ENCODE measurements at regions of chr3 and their contacts with region 1.

Region 1: GRCh38 chr3:187139126-187139894 is at the start of gene RPL39L:
- DNase-seq: peak; percentile 85 to 96 (median 90)
- ATAC-seq: peak; percentile 96 to 99 (median 97)
- H3K4me3 ChIP-seq: peak within 1 kb of the TSS; percentile 54 to 65
- H3K4me3 Mint-ChIP-seq: peak within 1 kb of the TSS; percentile 85 to 88 (median 85)
- H3K27ac ChIP-seq: peak within 1 kb of the TSS; percentile 84
- H3K27ac Mint-ChIP-seq: peak within 1 kb of the TSS; percentile 87 to 92
- H3K4me1 ChIP-seq: peaks cover 0 to 16% of the 10 kb centered on the region in 2 experiments
- H3K4me1 Mint-ChIP-seq: peaks cover 18 to 21% (median 20%) of the 10 kb centered on the region in 3 donors
- H3K27me3 ChIP-seq: no peaks in the 10 kb centered on the region
- H3K27me3 Mint-ChIP-seq: no peaks in the 10 kb centered on the region
- total RNA-seq, gene RPL39L: 0.85 to 3.8 (median 2.1) TPM

Region 2: GRCh38 chr3:187101184-187102072 is 37.9 kb before region 1 on chr3:
- CTCF ChIA-PET with region 1: interaction called, 4 to 11 read pairs
- POLR2A ChIA-PET with region 1: interaction called, 3 read pairs
- DNase-seq: peak in 34 of 35 experiments; percentile 1 to 68 (median 42)
- ATAC-seq: peak; percentile 68 to 86 (median 80)
- H3K4me3 ChIP-seq: peak overlapping the region; percentile 19 to 42
- H3K4me3 Mint-ChIP-seq: peak overlapping the region; percentile 53 to 65 (median 64)
- H3K27ac ChIP-seq: peak overlapping the region; percentile 54
- H3K27ac Mint-ChIP-seq: peak overlapping the region; percentile 71 to 88
- H3K4me1 ChIP-seq: peaks cover 9 to 14% of the 10 kb centered on the region in 2 experiments
- H3K4me1 Mint-ChIP-seq: peaks cover 18 to 50% (median 30%) of the 10 kb centered on the region in 3 donors
- H3K27me3 ChIP-seq: no peaks in the 10 kb centered on the region
- H3K27me3 Mint-ChIP-seq: no peaks in the 10 kb centered on the region

Measured in T-cell (primary cell).